ENCODE measurements at regions of chr2 and their contacts with region 1.

Region 1: GRCh38 chr2:46490521-46491141 is 11.3 kb downstream of the TMEM247 start:
- DNase-seq: peak; percentile 61 to 80
- ATAC-seq: peak; percentile 78 to 91 (median 85)
- H3K4me3 ChIP-seq: no peak overlapping the region
- H3K27ac ChIP-seq: peak overlapping the region in 9 of 10 donors; percentile 40 to 89 (median 83)
- H3K4me1 ChIP-seq: peaks cover 16 to 64% (median 44%) of the 10 kb centered on the region in 9 donors
- H3K27me3 ChIP-seq: no peaks in the 10 kb centered on the region
- CTCF ChIP-seq: peak in 6 of 9 donors; percentile 25 to 57 (median 41)

Region 2: GRCh38 chr2:46569061-46569560 is 78.5 kb after region 1 on chr2:
- intact Hi-C with region 1: loop called in 1 of 10 experiments (anchors 2 kb)
- DNase-seq: peak in 1 of 2 donors; percentile 42
- ATAC-seq: peak; percentile 19 to 64 (median 50)
- H3K4me3 ChIP-seq: peak overlapping the region in 1 of 10 donors; percentile 5
- H3K27ac ChIP-seq: peak overlapping the region; percentile 46 to 89 (median 80)
- H3K4me1 ChIP-seq: peaks cover 31 to 100% (median 90%) of the 10 kb centered on the region in 9 donors
- H3K27me3 ChIP-seq: no peaks in the 10 kb centered on the region
- CTCF ChIP-seq: no peak